CD14-positive monocyte (primary cell): ENCODE measurements at regions of chr1 and their contacts with region 1.

Region 1: DNA sequence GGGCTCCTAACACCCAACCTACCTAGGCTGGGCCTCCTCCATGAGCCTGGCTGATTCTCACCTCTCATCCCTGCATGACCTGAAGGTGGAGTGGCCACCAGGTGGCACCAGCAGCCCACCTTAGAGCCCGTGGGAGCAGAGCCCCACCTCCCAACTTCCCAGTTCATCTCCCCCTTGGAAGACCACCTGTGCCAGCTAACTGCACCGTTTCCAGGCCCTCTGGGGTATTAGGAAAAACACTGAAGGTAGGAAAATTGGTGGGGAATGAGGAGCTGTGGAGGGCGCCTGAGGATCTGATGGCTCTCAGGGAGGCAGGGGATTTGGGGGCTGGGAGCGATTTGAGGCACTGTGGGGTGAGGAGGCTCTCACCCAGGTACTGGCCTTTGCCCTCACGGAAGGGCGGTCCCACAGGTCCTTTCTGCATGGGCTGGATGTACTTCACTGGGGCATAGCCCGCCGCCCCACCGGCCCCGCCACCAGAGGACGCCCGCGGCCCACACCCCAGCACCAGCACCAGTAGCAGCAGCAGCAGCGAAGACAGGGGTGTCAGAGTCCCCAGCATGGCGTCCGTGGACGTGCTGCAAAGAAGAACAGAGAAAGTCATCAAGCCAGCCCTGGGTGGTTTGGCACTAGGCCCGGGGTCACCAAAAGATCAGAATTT is 11.1 kb downstream of the ADPRS start:
- DNase-seq: peak; percentile 55 to 68 (median 66)
- H3K4me3 ChIP-seq: peak overlapping the region in 1 of 3 experiments; percentile 24
- H3K4me3 Mint-ChIP-seq: peak overlapping the region; percentile 38 to 74
- H3K27ac ChIP-seq: peak overlapping the region in 1 of 2 donors; percentile 26
- H3K27ac Mint-ChIP-seq: peak overlapping the region in 2 of 7 donors; percentile 5 to 68
- H3K4me1 ChIP-seq: peaks cover 22 to 26% of the 10 kb centered on the region in 2 donors
- H3K4me1 Mint-ChIP-seq: peaks cover 30% of the 10 kb centered on the region
- H3K27me3 ChIP-seq: no peaks in the 10 kb centered on the region
- H3K27me3 Mint-ChIP-seq: peaks cover 0 to 8% (median 1%) of the 10 kb centered on the region in 3 donors
- CTCF ChIP-seq: peak; percentile 90

Region 2: DNA sequence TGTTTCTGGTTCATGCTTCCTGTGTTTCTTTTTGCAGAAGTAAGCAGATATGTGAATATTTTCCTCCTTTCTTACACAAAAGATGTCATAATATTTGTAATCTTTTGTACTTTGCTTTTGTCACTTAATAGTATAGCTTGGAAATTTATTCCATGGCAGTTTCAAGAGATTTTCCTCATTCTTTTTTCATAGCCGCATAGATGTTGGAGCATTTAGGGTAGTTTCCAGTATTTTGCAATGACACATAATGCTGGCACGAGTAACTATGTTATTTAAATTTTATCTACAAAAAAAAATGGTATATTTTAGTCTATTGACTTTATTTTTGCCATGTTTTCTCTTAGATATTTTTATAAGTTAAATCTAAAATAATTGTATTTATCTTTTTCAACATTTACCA is 128.2 kb before region 1 on chr1:
- intact Hi-C with region 1: no loop called
- DNase-seq: no peak
- H3K4me3 ChIP-seq: no peak overlapping the region
- H3K4me3 Mint-ChIP-seq: no peak overlapping the region
- H3K27ac ChIP-seq: no peak overlapping the region
- H3K27ac Mint-ChIP-seq: peak overlapping the region in 2 of 7 donors; percentile 25 to 69
- H3K4me1 ChIP-seq: no peaks in the 10 kb centered on the region
- H3K4me1 Mint-ChIP-seq: peaks cover 6% of the 10 kb centered on the region
- H3K27me3 ChIP-seq: no peaks in the 10 kb centered on the region
- H3K27me3 Mint-ChIP-seq: peaks cover 0 to 2% (median 0%) of the 10 kb centered on the region in 3 donors
- CTCF ChIP-seq: no peak

Region 3: DNA sequence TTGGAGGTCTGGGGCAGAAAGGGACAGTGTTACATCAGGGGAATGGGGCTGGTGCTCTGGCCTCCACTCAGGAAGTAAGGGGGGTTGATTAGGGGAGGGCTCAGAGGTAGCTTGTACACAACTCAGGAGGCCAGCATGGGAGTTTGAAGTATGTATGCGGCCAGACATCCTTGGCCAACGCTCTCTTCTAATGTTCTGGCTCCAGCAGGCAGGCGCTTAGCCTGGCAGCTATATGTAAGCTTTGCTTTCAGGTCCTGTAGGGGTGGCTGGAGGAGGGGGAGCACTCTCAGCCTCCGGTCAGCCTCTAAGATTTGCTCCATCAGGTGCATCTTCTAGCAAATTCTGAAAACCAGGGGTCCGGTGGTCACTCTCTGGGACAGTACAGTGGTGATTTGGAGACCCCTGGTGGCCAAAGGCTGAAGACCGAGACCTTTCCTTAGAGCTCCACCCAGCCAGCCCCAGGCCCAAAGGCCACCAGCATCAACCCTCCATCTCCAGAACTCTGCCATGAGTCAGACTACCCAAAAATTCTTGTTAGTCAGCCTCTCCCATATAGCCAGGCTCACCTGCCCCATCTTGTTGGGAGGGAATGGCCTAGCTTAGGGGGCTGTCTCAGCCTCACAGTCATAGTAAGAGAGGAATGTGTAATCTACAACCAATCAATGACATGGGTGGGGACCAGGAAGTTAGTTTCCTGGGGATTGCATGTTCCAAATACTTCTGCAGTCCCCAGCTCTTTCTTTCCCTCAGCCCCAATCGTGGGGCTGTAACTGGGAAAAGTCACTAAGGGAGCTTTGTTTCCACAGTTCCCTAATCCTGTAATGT is 34.9 kb after region 1 on chr1:
- intact Hi-C with region 1: loop called (anchors 1 to 2 kb)
- DNase-seq: peak; percentile 46 to 69 (median 69)
- H3K4me3 ChIP-seq: no peak overlapping the region
- H3K4me3 Mint-ChIP-seq: no peak overlapping the region
- H3K27ac ChIP-seq: peak overlapping the region in 1 of 2 donors; percentile 55
- H3K27ac Mint-ChIP-seq: peak overlapping the region in 2 of 7 donors; percentile 69 to 80
- H3K4me1 ChIP-seq: peaks cover 7 to 8% of the 10 kb centered on the region in 2 donors
- H3K4me1 Mint-ChIP-seq: peaks cover 13% of the 10 kb centered on the region
- H3K27me3 ChIP-seq: no peaks in the 10 kb centered on the region
- H3K27me3 Mint-ChIP-seq: no peaks in the 10 kb centered on the region
- CTCF ChIP-seq: peak; percentile 82

Region 4: GRCh38 chr1:36285448-36286101 is 185.8 kb after region 1 on chr1:
- intact Hi-C with region 1: loop called (anchors 1 to 2 kb)
- DNase-seq: peak; percentile 72 to 81 (median 75)
- H3K4me3 ChIP-seq: no peak overlapping the region
- H3K4me3 Mint-ChIP-seq: no peak overlapping the region
- H3K27ac ChIP-seq: peak overlapping the region in 1 of 2 donors; percentile 36
- H3K27ac Mint-ChIP-seq: peak overlapping the region in 4 of 7 donors; percentile 5 to 87 (median 52)
- H3K4me1 ChIP-seq: no peaks in the 10 kb centered on the region
- H3K4me1 Mint-ChIP-seq: peaks cover 2% of the 10 kb centered on the region
- H3K27me3 ChIP-seq: no peaks in the 10 kb centered on the region
- H3K27me3 Mint-ChIP-seq: no peaks in the 10 kb centered on the region
- CTCF ChIP-seq: peak; percentile 84